PC-9 (cell line): ENCODE measurements at regions of chr7 and their contacts with region 1.

Region 1: GRCh38 chr7:37495574-37496184 is 47.0 kb upstream of the ELMO1 start:
- DNase-seq: peak in 1 of 2 experiments; percentile 43
- H3K4me3 ChIP-seq: no peak overlapping the region
- H3K27ac ChIP-seq: no peak overlapping the region
- H3K4me1 ChIP-seq: no peaks in the 10 kb centered on the region
- H3K27me3 ChIP-seq: peaks cover 9% of the 10 kb centered on the region; the same call in 1 of the 2 replicates
- CTCF ChIP-seq: peak; percentile 90

Region 2: DNA sequence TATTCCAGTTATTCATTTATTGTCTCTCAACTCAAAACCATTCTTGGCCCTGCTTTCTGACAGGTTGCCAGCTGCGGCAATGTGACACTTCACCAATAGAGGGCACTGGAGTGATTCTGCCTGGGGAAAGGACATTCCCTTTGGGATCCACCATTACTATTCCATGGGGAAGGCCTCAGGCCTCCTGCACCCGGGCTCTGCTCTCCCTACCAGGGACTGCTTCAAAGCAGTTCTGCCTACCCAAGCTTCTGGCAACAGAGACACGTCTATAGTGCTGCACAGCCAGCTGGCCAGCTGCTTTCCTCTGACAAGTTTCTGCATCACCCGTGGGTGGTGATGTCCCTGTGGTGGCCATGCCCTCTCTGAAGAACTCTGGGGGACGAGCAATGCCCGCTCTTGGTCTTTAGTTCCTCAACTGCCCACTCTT is 210.9 kb before region 1 on chr7:
- CTCF ChIA-PET with region 1: no interaction called
- POLR2A ChIA-PET with region 1: no interaction called
- intact Hi-C with region 1: loop called (anchors 5 kb)
- DNase-seq: peak in 1 of 2 experiments; percentile 19
- H3K4me3 ChIP-seq: no peak overlapping the region
- H3K27ac ChIP-seq: no peak overlapping the region
- H3K4me1 ChIP-seq: no peaks in the 10 kb centered on the region
- H3K27me3 ChIP-seq: no peaks in the 10 kb centered on the region
- CTCF ChIP-seq: peak; percentile 74